ENCODE measurements at regions of chr17 and their contacts with region 1.

Region 1: DNA sequence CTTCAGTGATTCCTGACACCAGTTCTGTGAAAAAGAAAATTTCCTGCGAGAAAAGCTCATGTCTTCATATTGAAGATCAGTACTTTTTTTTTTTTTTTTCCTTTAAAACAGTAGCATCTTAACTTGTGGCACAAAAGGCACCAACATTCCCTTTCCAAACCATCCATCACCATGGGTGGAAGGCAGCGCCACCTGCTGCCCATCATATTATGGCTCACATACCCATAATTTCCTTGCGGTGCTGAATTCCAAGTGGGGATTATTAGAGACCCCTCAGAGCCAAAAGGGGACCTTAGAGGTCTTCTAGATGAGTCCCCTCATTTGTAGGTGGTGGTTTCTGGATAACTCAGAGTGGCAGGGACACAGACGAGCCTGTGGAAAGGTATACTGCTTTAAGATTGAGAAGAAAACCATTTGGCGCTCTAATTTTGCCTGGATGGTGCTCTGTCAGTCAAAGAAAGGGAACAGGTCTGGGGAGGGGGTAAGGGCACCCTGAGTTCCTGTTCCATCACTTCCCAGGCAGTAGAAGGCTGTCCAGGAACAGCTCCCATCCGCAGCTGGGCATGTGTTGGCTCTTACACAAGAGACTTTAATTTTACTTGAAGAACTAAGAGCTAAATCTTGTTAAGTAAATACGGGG is 7.9 kb upstream of the SOST start:
- DNase-seq: peak; percentile 74
- H3K4me3 ChIP-seq: no peak overlapping the region; a peak in 1 of 4 replicates
- H3K27ac ChIP-seq: no peak overlapping the region
- H3K4me1 ChIP-seq: no peaks in the 10 kb centered on the region
- H3K27me3 ChIP-seq: no peaks in the 10 kb centered on the region
- CTCF ChIP-seq: peak; percentile 97
- EP300 ChIP-seq: no peak
- RAD21 ChIP-seq: peak; percentile 53

Region 2: DNA sequence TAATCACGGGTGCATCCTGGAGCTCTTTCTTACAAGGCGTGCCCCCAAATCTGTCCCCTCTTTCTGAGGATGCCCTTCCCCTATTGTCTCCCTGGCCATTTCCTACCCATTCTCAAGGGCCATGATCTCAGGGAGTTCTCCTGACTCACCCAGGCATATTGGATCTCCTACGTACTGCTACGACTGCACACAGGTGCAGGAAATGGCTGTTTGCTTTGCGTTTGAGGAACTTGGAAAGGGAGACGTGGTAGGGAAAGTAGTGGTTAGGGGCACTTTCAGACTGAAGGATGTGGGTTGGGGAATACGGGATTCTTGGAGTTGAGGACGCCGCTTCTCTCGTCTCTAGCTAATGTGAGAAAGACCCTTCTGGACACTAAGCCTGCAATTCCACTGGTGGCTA is 86.1 kb before region 1 on chr17:
- CTCF ChIA-PET with region 1: no interaction called
- POLR2A ChIA-PET with region 1: no interaction called
- DNase-seq: no peak
- H3K4me3 ChIP-seq: no peak overlapping the region
- H3K27ac ChIP-seq: no peak overlapping the region
- H3K4me1 ChIP-seq: peaks cover 0 to 3% of the 10 kb centered on the region in 2 experiments; a peak in 1 of 4 replicates
- H3K27me3 ChIP-seq: no peaks in the 10 kb centered on the region
- CTCF ChIP-seq: no peak
- EP300 ChIP-seq: no peak
- RAD21 ChIP-seq: no peak

Region 3: DNA sequence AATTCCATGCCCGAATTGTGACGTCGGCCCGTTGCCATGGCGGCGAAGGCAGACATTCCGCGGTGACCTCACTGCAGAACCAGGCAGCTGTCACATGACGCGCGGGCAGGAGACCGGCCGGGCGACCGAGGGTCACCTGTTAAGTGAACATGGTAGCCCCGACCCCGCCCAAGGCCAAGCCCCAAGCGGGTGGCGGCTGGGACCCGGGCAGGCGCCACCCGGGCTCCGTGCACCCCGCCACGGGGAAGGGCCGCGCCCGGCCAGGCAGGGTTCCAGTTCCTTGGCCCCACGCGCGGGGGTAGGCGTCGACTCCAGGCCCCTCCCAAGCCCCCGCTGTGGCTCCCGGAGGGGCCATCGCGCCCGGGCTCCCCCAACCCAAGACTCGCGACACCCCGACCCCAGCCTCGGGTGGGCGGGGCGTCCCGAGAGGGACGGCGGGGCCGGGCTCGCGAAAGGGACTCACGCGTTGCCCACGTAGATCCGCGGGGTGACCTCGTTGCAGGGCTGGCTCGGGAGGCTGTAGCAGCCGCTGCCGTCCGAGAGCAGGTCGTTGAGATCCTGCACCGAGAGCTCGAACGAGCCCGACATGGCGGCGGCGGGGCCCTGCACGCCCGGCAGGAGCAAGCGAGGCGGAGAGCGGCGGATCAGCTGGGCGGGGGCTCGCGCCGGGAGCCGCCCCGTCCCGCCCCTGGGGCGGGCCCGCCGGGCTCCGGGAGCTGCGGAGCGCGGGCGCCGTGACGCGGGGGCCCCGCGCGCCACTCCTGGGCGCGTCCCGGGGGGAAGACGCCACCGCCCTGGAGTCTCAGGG is 12.0 kb after region 1 on chr17 and contains the start of gene DUSP3:
- CTCF ChIA-PET with region 1: interaction called, 59 read pairs
- POLR2A ChIA-PET with region 1: interaction called, 3 read pairs
- DNase-seq: peak; percentile 97
- H3K4me3 ChIP-seq: peak within 1 kb of the TSS; percentile 77 to 84
- H3K27ac ChIP-seq: peak within 1 kb of the TSS; percentile 90 to 95
- H3K4me1 ChIP-seq: peaks cover 8% of the 10 kb centered on the region in 2 experiments; a peak in 1 of 4 replicates
- H3K27me3 ChIP-seq: no peaks in the 10 kb centered on the region
- CTCF ChIP-seq: no peak
- EP300 ChIP-seq: no peak
- RAD21 ChIP-seq: no peak
- polyA plus RNA-seq, gene DUSP3: 31.5 and 39.7 TPM in 2 replicates

Region 4: GRCh38 chr17:43816336-43817320 is 50.1 kb after region 1 on chr17:
- CTCF ChIA-PET with region 1: interaction called, 12 read pairs
- POLR2A ChIA-PET with region 1: no interaction called
- DNase-seq: no peak
- H3K4me3 ChIP-seq: no peak overlapping the region
- H3K27ac ChIP-seq: no peak overlapping the region
- H3K4me1 ChIP-seq: peaks cover 0 to 8% of the 10 kb centered on the region in 2 experiments; a peak in 1 of 4 replicates
- H3K27me3 ChIP-seq: no peaks in the 10 kb centered on the region
- CTCF ChIP-seq: no peak
- EP300 ChIP-seq: no peak
- RAD21 ChIP-seq: no peak

Region 5: GRCh38 chr17:43917348-43918018 is 150.9 kb after region 1 on chr17:
- CTCF ChIA-PET with region 1: no interaction called
- POLR2A ChIA-PET with region 1: no interaction called
- DNase-seq: no peak
- H3K4me3 ChIP-seq: no peak overlapping the region
- H3K27ac ChIP-seq: no peak overlapping the region
- H3K4me1 ChIP-seq: peaks cover 0 to 7% of the 10 kb centered on the region in 2 experiments; a peak in 1 of 4 replicates
- H3K27me3 ChIP-seq: no peaks in the 10 kb centered on the region; the same call in 1 of the 2 replicates
- CTCF ChIP-seq: no peak
- EP300 ChIP-seq: no peak
- RAD21 ChIP-seq: no peak